GM13977 (cell line): ENCODE measurements at regions of chr1 and their contacts with region 1.

Region 1: DNA sequence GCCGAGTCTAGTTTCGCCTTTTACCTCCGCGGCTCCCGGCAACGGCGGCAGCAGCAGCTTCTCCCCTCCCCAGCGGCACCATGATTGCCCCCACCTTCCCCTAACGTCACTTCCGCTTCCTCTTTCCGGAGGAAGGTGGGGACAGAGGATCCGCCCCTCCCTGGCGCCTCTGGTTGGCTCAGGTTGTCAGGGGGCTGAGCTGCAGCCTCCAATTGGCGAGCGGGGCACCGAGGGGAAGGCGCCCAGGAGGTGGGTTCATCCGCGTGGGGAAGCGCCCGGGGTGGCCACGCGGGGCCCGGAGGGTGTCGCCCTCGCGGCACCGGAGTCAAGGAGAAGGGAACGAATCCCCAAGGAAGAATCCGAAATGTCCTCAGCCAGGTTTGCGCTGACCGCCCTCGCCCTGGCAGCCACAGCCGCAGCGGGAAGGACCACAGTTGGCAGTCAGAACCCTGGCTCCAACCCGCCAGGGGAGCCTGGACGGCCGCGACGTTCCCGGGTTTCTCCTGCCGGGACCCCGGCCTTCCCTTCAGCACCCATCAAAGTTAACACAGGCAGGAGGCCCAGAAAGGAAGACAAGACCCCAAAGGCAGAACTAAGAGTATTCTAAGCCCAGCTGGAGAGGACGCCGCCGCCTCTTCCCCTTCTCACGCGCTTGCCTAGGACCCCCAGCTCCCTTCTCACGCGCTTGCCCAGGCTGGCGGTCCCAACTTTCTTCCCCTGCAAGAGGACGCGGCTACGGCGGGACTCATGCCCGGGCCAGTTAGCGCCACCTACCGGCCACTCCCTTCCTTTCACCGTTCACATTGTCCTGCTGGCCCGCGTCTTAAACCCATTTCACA is at the start of gene MTF1:
- DNase-seq: peak; percentile 99
- CTCF ChIP-seq: peak; percentile 93

Region 2: DNA sequence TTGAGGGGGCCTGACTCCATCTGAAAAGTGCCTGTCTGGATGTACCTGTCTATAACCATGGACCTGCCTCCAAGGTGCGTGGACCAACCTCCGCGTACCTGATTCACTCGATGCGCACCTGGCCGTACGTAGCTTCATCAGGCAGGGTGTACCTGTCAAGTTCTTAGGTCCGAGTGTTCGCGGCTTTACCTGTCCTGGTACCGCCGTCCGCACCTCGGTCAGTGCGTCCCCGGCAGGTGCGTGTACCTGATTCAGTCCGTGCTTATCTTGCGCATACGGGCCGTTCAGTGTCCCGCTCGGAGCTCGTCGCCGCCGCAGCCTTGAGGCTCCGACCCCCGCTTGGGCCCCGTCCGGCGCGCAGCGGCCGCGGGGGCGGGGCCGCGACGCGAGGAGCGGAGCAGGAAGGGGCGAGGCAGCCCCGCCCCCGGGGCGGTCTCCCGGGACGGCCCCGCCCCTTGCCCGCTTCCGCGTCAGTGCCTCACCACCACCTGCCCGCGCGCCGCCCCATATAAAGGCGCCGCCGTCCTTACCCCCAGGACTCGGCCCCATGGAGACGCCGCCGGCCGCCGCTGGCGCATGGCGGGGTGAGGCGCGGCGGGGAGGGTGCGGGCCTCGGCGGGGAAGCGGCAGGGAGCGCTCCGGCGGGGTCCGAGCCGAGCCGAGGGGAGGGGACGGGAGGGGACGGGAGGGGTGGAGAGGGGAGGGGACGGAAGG is 385.5 kb before region 1 on chr1 and contains the start of gene ZC3H12A:
- in situ Hi-C with region 1: no loop called
- DNase-seq: peak; percentile 100
- CTCF ChIP-seq: no peak

Region 3: GRCh38 chr1:37553927-37554808 is 305.6 kb before region 1 on chr1 and contains the start of gene SNIP1:
- in situ Hi-C with region 1: loop called (anchors 25 kb)
- DNase-seq: peak; percentile 98
- CTCF ChIP-seq: no peak

Region 4: GRCh38 chr1:38046884-38047602 is 187.3 kb after region 1 on chr1:
- in situ Hi-C with region 1: no loop called
- DNase-seq: peak; percentile 96
- CTCF ChIP-seq: no peak